ENCODE measurements at regions of chr17 and their contacts with region 1.

Region 1: DNA sequence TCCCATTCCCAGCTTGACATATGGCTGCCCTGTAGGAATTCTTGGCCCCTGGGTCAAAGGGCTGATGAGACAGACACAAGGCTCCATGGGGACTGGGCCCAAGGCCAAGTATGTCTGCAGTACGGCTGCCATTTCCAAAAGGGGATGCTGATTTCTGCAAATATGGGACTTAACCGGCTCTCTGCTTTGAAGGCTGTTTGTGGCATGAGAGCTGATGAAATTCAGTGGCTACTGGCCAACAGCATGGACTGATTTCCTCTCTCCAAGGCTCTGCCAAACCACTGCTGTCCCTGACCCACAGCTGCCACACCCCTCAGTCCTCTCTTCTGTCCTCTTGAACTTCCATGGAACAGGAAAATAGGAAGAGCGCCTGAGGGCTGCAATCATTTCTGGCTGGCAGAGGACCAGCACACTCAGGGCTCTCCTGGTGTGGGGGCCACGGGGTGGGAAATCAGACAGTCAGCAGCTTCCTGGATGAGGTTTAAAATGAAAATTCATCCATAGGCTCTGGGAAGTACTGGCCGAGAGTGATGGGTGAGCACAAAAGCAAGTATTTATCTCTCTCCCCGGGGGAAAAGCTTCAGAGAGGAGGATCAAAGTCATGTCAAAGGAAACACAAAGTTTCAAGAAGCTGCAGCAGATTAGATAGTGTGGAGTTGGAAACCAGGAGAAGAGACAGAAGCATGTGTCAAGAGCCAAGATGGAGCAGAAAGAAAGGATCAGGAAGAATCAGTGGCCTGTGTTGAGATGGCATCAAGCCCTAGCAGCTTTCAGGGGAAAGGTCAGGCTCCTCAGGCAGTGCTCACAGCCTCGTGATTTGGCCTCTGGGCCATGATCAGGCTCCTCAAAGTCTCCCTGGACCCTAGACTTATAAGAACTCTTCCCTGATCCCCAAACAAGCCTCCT is 64.1 kb upstream of the SREBF1 start:
- DNase-seq: peak; percentile 85 to 92 (median 88)
- ATAC-seq: peak; percentile 84 to 96 (median 94)
- H3K4me3 ChIP-seq: no peak overlapping the region
- H3K27ac ChIP-seq: peak overlapping the region in 11 of 12 donors; percentile 58 to 75 (median 66)
- H3K4me1 ChIP-seq: peaks cover 7 to 53% (median 31%) of the 10 kb centered on the region in 12 donors
- H3K27me3 ChIP-seq: no peaks in the 10 kb centered on the region
- CTCF ChIP-seq: no peak
- POLR2A ChIP-seq: no peak

Region 2: GRCh38 chr17:17591355-17592298 is 309.2 kb before region 1 on chr17 and contains the start of gene PEMT:
- intact Hi-C with region 1: loop called in 1 of 10 experiments (anchors 5 kb)
- DNase-seq: peak; percentile 96 to 98 (median 97)
- ATAC-seq: peak; percentile 98 to 99 (median 99)
- H3K4me3 ChIP-seq: peak within 1 kb of the TSS; percentile 76 to 98 (median 90)
- H3K27ac ChIP-seq: peak within 1 kb of the TSS; percentile 54 to 96 (median 92)
- H3K4me1 ChIP-seq: peaks cover 0 to 27% (median 17%) of the 10 kb centered on the region in 12 donors
- H3K27me3 ChIP-seq: no peaks in the 10 kb centered on the region
- CTCF ChIP-seq: peak in 2 of 12 donors; percentile 2 to 13
- POLR2A ChIP-seq: peak in 1 of 2 donors; percentile 68
- total RNA-seq, gene PEMT: 15.7 to 41.0 (median 25.4) TPM

Region 3: GRCh38 chr17:17877529-17878358 is 23.1 kb before region 1 on chr17:
- intact Hi-C with region 1: loop called in 1 of 10 experiments (anchors 2 kb)
- DNase-seq: peak; percentile 84 to 92 (median 85)
- ATAC-seq: peak; percentile 86 to 88 (median 88)
- H3K4me3 ChIP-seq: peak overlapping the region in 2 of 12 donors; percentile 8 to 21
- H3K27ac ChIP-seq: peak overlapping the region; percentile 71 to 98 (median 90)
- H3K4me1 ChIP-seq: peaks cover 16 to 66% (median 50%) of the 10 kb centered on the region in 12 donors
- H3K27me3 ChIP-seq: no peaks in the 10 kb centered on the region
- CTCF ChIP-seq: peak in 4 of 12 donors; percentile 21 to 39 (median 24)
- POLR2A ChIP-seq: no peak

Region 4: GRCh38 chr17:17942846-17943245 is 42.0 kb after region 1 on chr17:
- intact Hi-C with region 1: no loop called
- DNase-seq: no peak
- ATAC-seq: peak in 1 of 4 donors; percentile 42
- H3K4me3 ChIP-seq: no peak overlapping the region
- H3K27ac ChIP-seq: peak overlapping the region in 8 of 12 donors; percentile 1 to 40 (median 16)
- H3K4me1 ChIP-seq: peaks cover 8 to 88% (median 48%) of the 10 kb centered on the region in 12 donors
- H3K27me3 ChIP-seq: no peaks in the 10 kb centered on the region
- CTCF ChIP-seq: no peak
- POLR2A ChIP-seq: no peak